PC-3 (cell line): ENCODE measurements at regions of chr12 and their contacts with region 1.

Region 1: GRCh38 chr12:49347384-49348237 is 923 bp downstream of the DNAJC22 start:
- DNase-seq: peak; percentile 89
- ATAC-seq: peak; percentile 80
- H3K4me3 ChIP-seq: peak overlapping the region; percentile 70
- H3K27ac ChIP-seq: peak overlapping the region; percentile 24; the same call in 1 of the 2 replicates
- H3K4me1 ChIP-seq: peaks cover 37% of the 10 kb centered on the region
- H3K27me3 ChIP-seq: peaks cover 21% of the 10 kb centered on the region
- CTCF ChIP-seq: peak; percentile 97

Region 2: GRCh38 chr12:49026678-49027480 is 320.7 kb before region 1 on chr12:
- CTCF ChIA-PET with region 1: no interaction called
- POLR2A ChIA-PET with region 1: no interaction called
- intact Hi-C with region 1: no loop called
- DNase-seq: no peak
- ATAC-seq: no peak
- H3K4me3 ChIP-seq: no peak overlapping the region
- H3K27ac ChIP-seq: no peak overlapping the region
- H3K4me1 ChIP-seq: no peaks in the 10 kb centered on the region
- H3K27me3 ChIP-seq: no peaks in the 10 kb centered on the region
- CTCF ChIP-seq: no peak

Region 3: GRCh38 chr12:49296034-49296835 is 51.4 kb before region 1 on chr12:
- CTCF ChIA-PET with region 1: interaction called, 11 read pairs
- POLR2A ChIA-PET with region 1: no interaction called
- intact Hi-C with region 1: no loop called
- DNase-seq: peak; percentile 64
- ATAC-seq: peak; percentile 41
- H3K4me3 ChIP-seq: peak overlapping the region; percentile 68
- H3K27ac ChIP-seq: no peak overlapping the region
- H3K4me1 ChIP-seq: peaks cover 12% of the 10 kb centered on the region
- H3K27me3 ChIP-seq: no peaks in the 10 kb centered on the region
- CTCF ChIP-seq: peak; percentile 88

Region 4: GRCh38 chr12:49331380-49332222 is 16.0 kb before region 1 on chr12:
- CTCF ChIA-PET with region 1: interaction called, 16 read pairs
- POLR2A ChIA-PET with region 1: no interaction called
- intact Hi-C with region 1: no loop called
- DNase-seq: peak; percentile 66
- ATAC-seq: peak; percentile 90
- H3K4me3 ChIP-seq: no peak overlapping the region
- H3K27ac ChIP-seq: no peak overlapping the region
- H3K4me1 ChIP-seq: no peaks in the 10 kb centered on the region
- H3K27me3 ChIP-seq: no peaks in the 10 kb centered on the region
- CTCF ChIP-seq: peak; percentile 88

Region 5: GRCh38 chr12:49358483-49359141 is 11.0 kb after region 1 on chr12:
- CTCF ChIA-PET with region 1: interaction called, 16 read pairs
- POLR2A ChIA-PET with region 1: no interaction called
- intact Hi-C with region 1: no loop called
- DNase-seq: peak; percentile 63
- ATAC-seq: peak; percentile 89
- H3K4me3 ChIP-seq: 0 out of 2 replicates have a peak overlapping the region, but pooled peaks have one; percentile 2
- H3K27ac ChIP-seq: no peak overlapping the region
- H3K4me1 ChIP-seq: peaks cover 21% of the 10 kb centered on the region
- H3K27me3 ChIP-seq: no peaks in the 10 kb centered on the region
- CTCF ChIP-seq: peak; percentile 92

Region 6: DNA sequence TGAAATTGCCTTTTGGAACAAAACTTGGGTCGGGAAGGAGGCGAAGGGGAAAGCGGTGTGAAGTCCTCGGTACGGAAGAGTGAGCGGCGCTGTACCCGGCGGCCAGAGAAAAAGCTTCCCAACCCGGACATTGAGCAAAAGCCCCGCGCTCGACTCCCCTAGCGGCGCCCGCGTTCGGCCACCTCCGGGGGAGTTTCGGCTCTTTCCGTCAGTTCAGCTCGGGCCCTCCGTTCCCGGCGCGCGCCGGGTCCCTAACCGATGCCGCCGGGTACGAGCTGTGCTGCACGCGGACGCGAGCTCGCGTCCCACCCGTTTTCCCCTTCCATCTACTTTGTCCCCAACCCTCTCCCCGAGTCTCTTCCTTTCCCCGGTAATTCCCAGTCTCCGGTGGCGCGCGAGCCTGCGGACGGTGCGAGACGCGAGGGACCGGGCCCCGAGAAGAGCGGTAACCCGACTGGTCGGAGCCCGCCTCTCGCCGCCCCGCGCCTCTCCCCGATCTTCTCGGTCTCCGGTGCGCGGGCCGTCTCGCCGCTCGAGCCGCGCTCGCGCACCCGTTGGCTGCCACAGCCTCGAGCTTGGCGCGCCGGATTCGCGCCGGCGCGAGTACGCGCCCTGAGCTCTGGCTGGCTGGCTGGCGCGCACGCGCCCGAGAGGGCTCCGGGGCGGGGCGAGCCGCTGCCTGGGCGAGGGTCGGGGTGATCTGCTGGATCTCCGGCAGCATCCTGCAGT is 19.2 kb after region 1 on chr12:
- CTCF ChIA-PET with region 1: interaction called, 10 read pairs
- POLR2A ChIA-PET with region 1: no interaction called
- intact Hi-C with region 1: no loop called
- DNase-seq: peak; percentile 95
- ATAC-seq: peak; percentile 82
- H3K4me3 ChIP-seq: peak overlapping the region; percentile 85
- H3K27ac ChIP-seq: peak overlapping the region; percentile 82
- H3K4me1 ChIP-seq: peaks cover 37% of the 10 kb centered on the region
- H3K27me3 ChIP-seq: no peaks in the 10 kb centered on the region
- CTCF ChIP-seq: peak; percentile 16; the same call in 1 of the 2 replicates

Region 7: DNA sequence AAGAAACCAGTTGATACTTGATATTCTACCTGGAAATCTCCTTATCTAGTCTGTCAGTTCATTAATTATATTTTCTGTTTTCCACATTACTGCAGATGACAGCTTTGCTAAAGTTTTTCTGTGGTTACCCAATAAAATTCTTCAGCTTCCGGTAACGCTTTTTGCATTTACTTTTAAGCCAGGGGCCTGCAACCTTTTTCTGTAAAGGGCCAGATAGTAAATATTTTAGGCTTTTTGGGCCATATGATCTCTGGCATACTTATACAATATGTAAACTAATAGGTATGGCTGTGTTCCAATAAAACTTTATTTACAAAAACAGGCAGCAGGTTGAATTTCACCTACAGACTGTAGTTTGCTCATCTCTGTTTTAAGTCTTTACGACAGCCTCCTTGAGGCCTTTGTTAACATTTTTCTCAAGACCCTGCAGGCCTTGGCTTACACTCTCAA is 67.9 kb after region 1 on chr12:
- CTCF ChIA-PET with region 1: no interaction called
- POLR2A ChIA-PET with region 1: interaction called, 10 read pairs
- intact Hi-C with region 1: no loop called
- DNase-seq: no peak
- ATAC-seq: no peak
- H3K4me3 ChIP-seq: no peak overlapping the region
- H3K27ac ChIP-seq: no peak overlapping the region
- H3K4me1 ChIP-seq: no peaks in the 10 kb centered on the region
- H3K27me3 ChIP-seq: no peaks in the 10 kb centered on the region
- CTCF ChIP-seq: no peak